Activated CD4-positive, alpha-beta memory T cell treated with anti-CD3 and anti-CD28 coated beads for 36 hours (primary cell): ENCODE measurements at regions of chr12 and their contacts with region 1.

Region 1: DNA sequence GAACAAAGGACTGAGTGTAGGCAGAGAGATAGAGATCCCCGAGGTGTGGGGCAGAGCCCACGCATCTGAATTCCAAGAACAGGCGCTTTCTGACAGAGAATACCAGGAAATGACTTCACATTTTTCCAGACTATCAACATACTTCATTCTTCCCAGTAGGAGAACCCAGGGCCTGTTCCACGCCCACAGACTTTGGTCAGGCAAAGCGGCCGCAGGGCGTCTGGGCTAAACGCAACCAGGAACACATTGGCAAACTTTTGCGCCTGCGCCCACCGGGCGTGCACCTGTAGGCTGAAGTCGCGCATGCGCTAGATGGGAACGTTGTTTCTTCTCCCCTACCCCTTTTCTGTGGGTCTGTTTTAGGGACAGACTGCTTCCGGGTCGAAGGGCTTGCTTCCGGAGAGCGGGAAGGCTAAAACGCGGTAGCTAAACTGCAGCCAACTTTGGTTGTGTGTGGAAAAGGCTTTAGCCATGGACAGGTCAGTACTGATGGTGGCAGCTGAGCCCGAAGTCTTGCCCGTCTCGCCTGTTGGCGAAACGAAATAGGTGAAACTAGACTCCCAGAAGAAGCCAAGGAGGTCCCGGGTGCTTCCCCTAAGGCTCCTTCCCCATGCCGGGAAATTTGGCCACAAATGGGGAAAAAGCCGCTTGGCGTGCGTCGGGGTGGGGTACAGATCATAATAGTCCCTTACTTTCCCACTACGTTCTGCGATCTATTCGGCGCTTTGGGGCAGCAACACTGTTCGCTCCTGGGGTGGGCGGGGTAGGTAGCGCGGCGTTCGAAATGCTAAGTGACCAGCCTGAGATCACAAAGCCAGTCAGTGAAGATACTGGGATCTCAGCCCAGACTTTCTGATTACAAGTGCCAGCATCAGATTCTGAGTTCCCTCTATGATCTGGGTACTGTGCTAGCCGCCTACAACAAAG is at the start of gene NUP107:
- DNase-seq: peak; percentile 98
- H3K4me3 Mint-ChIP-seq: peak within 1 kb of the TSS; percentile 98
- H3K27ac Mint-ChIP-seq: peak within 1 kb of the TSS; percentile 96
- H3K4me1 Mint-ChIP-seq: peaks cover 30% of the 10 kb centered on the region
- H3K27me3 Mint-ChIP-seq: no peaks in the 10 kb centered on the region
- total RNA-seq, gene NUP107: 128 TPM

Region 2: GRCh38 chr12:68223083-68223747 is 463.6 kb before region 1 on chr12:
- CTCF ChIA-PET with region 1: interaction called, 5 read pairs
- POLR2A ChIA-PET with region 1: no interaction called
- intact Hi-C with region 1: loop called (anchors 10 kb)
- DNase-seq: peak; percentile 83
- H3K4me3 Mint-ChIP-seq: no peak overlapping the region
- H3K27ac Mint-ChIP-seq: no peak overlapping the region
- H3K4me1 Mint-ChIP-seq: peaks cover 17% of the 10 kb centered on the region
- H3K27me3 Mint-ChIP-seq: peaks cover 7% of the 10 kb centered on the region

Region 3: DNA sequence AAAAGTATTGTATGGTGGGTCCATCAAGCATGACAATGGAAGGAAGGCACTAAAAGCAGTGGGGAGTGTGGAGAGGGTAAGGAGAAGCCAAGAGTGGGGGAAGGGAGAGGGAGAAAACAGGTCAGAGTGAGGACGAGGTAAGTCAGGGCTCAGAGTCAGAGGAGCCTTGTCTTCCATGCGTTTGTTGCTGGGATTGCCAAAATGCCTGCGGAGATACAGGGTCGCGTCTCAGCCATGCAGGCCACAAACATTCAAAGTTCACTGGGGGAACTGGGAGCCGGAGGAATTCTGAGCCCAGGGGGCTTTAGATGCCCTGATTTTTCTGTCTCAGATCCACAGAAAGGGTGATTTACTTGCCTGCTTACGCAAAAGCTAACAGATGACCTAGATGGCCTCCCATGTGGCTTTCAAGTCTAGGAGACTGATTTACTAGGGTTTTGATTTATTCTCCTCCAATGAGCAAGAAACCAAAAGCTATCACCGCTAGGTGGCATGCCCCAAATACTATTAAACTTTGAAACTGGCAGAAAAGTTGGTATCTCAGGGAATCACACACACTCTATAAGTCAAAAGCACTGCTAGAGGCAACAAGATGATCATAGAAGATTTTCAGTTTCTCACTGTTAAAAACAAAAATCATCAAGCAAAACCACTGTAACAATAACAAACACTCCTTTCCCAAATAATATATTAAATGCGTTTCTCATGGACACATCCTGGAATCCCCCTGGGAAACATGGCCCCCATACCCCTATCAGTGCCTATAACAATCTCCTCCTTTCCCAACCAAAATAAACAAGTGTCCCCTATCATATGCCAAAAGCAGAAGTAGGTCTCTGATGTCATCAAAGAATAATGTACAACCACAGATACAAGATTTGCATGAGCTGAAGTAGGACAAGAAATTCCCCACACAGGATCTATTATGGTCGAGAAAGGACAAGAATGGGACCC is 328.0 kb before region 1 on chr12:
- CTCF ChIA-PET with region 1: interaction called, 5 read pairs
- POLR2A ChIA-PET with region 1: no interaction called
- intact Hi-C with region 1: loop called (anchors 1 kb)
- DNase-seq: peak; percentile 71
- H3K4me3 Mint-ChIP-seq: no peak overlapping the region
- H3K27ac Mint-ChIP-seq: no peak overlapping the region
- H3K4me1 Mint-ChIP-seq: peaks cover 21% of the 10 kb centered on the region
- H3K27me3 Mint-ChIP-seq: no peaks in the 10 kb centered on the region

Region 4: DNA sequence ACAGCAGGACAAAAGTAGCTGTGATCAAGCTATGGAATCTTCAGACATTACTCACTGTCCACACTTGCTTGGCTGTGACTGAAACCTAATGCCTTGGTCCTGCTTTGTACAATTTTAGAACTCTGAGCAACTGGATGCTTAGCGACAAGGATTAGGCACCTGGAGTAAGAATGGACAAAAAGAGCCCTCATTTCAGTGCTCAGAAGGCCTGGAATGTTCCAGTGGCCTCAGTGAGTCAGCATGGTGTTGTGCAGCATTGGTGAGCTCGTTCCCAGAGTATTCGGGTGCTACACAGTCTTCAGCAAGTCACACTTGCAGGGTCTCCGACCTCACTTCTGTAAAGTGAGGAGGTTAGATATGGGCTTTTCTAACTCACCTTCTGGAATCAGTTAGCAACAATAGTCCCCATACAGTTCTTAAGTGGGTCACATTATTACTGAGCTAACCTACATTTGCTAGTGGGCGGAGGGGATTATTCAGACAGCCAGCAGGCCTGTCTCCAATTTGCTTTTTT is 246.7 kb before region 1 on chr12:
- CTCF ChIA-PET with region 1: no interaction called
- POLR2A ChIA-PET with region 1: no interaction called
- intact Hi-C with region 1: no loop called
- DNase-seq: no peak
- H3K4me3 Mint-ChIP-seq: no peak overlapping the region
- H3K27ac Mint-ChIP-seq: no peak overlapping the region
- H3K4me1 Mint-ChIP-seq: peaks cover 23% of the 10 kb centered on the region
- H3K27me3 Mint-ChIP-seq: no peaks in the 10 kb centered on the region

Region 5: GRCh38 chr12:68482660-68483059 is 204.2 kb before region 1 on chr12:
- CTCF ChIA-PET with region 1: no interaction called
- POLR2A ChIA-PET with region 1: interaction called, 3 read pairs
- intact Hi-C with region 1: loop called (anchors 2 kb)
- DNase-seq: peak; percentile 49
- H3K4me3 Mint-ChIP-seq: no peak overlapping the region
- H3K27ac Mint-ChIP-seq: peak overlapping the region; percentile 94
- H3K4me1 Mint-ChIP-seq: peaks cover 50% of the 10 kb centered on the region
- H3K27me3 Mint-ChIP-seq: no peaks in the 10 kb centered on the region

Region 6: GRCh38 chr12:68641138-68641537 is 45.7 kb before region 1 on chr12:
- CTCF ChIA-PET with region 1: no interaction called
- POLR2A ChIA-PET with region 1: no interaction called
- intact Hi-C with region 1: loop called (anchors 2 kb)
- DNase-seq: peak; percentile 68
- H3K4me3 Mint-ChIP-seq: peak overlapping the region; percentile 32
- H3K27ac Mint-ChIP-seq: peak overlapping the region; percentile 8
- H3K4me1 Mint-ChIP-seq: peaks cover 76% of the 10 kb centered on the region
- H3K27me3 Mint-ChIP-seq: no peaks in the 10 kb centered on the region

Region 7: GRCh38 chr12:68727776-68728175 is 40.9 kb after region 1 on chr12:
- CTCF ChIA-PET with region 1: no interaction called
- POLR2A ChIA-PET with region 1: no interaction called
- intact Hi-C with region 1: no loop called
- DNase-seq: no peak
- H3K4me3 Mint-ChIP-seq: no peak overlapping the region
- H3K27ac Mint-ChIP-seq: no peak overlapping the region
- H3K4me1 Mint-ChIP-seq: no peaks in the 10 kb centered on the region
- H3K27me3 Mint-ChIP-seq: no peaks in the 10 kb centered on the region

Region 8: DNA sequence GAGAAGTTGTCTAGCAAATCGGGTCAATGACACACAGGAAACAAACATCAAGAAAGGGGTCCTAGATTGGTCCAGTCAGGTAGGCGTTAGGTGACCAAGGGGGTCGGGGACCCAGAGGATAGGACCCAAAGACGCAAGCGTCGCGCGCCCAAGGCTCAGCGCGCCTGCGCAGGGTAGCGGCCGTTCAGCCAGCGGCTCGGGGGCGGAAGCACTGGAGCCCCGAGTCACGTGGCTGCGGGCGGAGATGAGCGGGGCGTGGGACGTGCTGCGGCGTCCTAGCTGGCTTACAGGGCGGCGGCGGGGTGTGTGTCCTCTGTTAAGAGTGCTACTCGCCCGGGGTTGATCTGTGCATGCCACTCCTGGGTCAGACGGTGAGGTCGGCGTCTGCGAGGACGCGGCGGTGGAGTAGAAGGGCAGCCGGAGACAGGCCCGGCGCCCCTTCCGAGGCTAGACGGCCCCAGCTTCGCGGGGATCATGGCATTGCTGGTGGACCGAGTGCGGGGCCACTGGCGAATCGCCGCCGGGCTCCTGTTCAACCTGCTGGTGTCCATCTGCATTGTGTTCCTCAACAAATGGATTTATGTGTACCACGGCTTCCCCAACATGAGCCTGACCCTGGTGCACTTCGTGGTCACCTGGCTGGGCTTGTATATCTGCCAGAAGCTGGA is 59.2 kb after region 1 on chr12 and contains the start of gene SLC35E3:
- CTCF ChIA-PET with region 1: no interaction called
- POLR2A ChIA-PET with region 1: no interaction called
- intact Hi-C with region 1: loop called (anchors 2 kb)
- DNase-seq: peak; percentile 96
- H3K4me3 Mint-ChIP-seq: peak within 1 kb of the TSS; percentile 92
- H3K27ac Mint-ChIP-seq: peak within 1 kb of the TSS; percentile 64
- H3K4me1 Mint-ChIP-seq: peaks cover 23% of the 10 kb centered on the region
- H3K27me3 Mint-ChIP-seq: no peaks in the 10 kb centered on the region
- total RNA-seq, gene SLC35E3: 4.1 to 5.3 TPM

Region 9: DNA sequence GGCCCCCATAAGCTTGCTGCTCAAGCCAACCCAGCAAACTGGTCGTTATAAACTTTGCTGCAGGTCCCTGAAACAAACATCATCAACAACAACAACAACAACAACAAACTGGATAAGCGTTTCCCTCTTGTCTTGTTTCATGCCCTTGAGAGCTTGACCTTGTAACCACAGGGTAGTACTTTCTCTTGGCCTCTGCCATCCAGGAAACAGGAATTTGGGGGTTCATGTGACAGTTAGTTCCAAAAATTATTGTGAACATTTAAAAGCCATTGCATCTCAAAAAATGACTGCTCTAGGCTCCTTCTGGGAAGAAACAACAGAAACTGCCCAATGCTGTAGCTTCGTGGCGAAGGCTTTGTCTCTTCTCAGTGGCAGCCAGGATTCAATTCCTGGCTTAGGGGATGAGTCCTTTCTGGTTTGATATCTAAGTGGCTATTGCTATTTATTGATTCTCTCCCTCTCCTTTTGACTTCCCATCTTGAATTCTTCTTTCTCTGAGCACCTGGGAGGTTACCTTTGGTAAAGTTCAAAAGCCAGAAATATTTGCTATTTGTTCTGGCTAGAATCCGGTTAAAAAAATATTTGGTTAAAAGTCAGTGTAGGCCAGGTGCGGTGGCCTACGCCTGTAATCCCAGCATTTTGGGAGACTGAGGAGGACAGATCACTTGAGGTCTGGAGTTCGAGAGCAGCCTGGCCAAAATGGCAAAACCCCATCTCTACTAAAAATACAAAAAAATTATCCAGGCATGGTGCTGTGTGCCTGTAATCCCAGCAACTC is 298.1 kb after region 1 on chr12:
- CTCF ChIA-PET with region 1: no interaction called
- POLR2A ChIA-PET with region 1: no interaction called
- intact Hi-C with region 1: no loop called
- DNase-seq: no peak
- H3K4me3 Mint-ChIP-seq: no peak overlapping the region
- H3K27ac Mint-ChIP-seq: no peak overlapping the region
- H3K4me1 Mint-ChIP-seq: no peaks in the 10 kb centered on the region
- H3K27me3 Mint-ChIP-seq: peaks cover 12% of the 10 kb centered on the region